Left cardiac atrium (tissue), 4 donors: ENCODE measurements at regions of chr9 and their contacts with region 1.

Region 1: GRCh38 chr9:120742951-120743416 is 28.7 kb upstream of the MEGF9 start:
- DNase-seq: no peak
- ATAC-seq: peak in 1 of 2 donors; percentile 44

Region 2: GRCh38 chr9:120807607-120808379 is 64.8 kb after region 1 on chr9:
- intact Hi-C with region 1: loop called in 1 of 2 experiments (anchors 10 kb)
- DNase-seq: no peak
- ATAC-seq: no peak